ENCODE measurements at regions of chr11 and their contacts with region 1.

Region 1: GRCh38 chr11:73760679-73761402 is at the start of gene RAB6A:
- DNase-seq: peak; percentile 95
- ATAC-seq: peak; percentile 95
- H3K4me3 ChIP-seq: peak within 1 kb of the TSS; percentile 58 to 85
- H3K27ac ChIP-seq: peak within 1 kb of the TSS; percentile 89
- H3K4me1 ChIP-seq: peaks cover 19% of the 10 kb centered on the region; the same call in 1 of the 2 replicates
- H3K27me3 ChIP-seq: no peaks in the 10 kb centered on the region; the same call in 1 of the 2 replicates
- CTCF ChIP-seq: no peak
- total RNA-seq, gene RAB6A: 149 TPM

Region 2: GRCh38 chr11:73734993-73735392 is 25.8 kb before region 1 on chr11:
- CTCF ChIA-PET with region 1: no interaction called
- POLR2A ChIA-PET with region 1: interaction called, 10 read pairs
- in situ Hi-C with region 1: no loop called
- intact Hi-C with region 1: no loop called
- DNase-seq: no peak
- ATAC-seq: no peak
- H3K4me3 ChIP-seq: no peak overlapping the region
- H3K27ac ChIP-seq: no peak overlapping the region
- H3K4me1 ChIP-seq: no peaks in the 10 kb centered on the region
- H3K27me3 ChIP-seq: no peaks in the 10 kb centered on the region
- CTCF ChIP-seq: no peak

Region 3: GRCh38 chr11:73787643-73788537 is 27.0 kb after region 1 on chr11 and contains the start of gene MRPL48:
- CTCF ChIA-PET with region 1: no interaction called
- POLR2A ChIA-PET with region 1: no interaction called
- in situ Hi-C with region 1: no loop called
- intact Hi-C with region 1: no loop called
- DNase-seq: peak; percentile 88
- ATAC-seq: peak; percentile 99
- H3K4me3 ChIP-seq: peak within 1 kb of the TSS; percentile 65 to 69
- H3K27ac ChIP-seq: peak within 1 kb of the TSS; percentile 99
- H3K4me1 ChIP-seq: peaks cover 12% of the 10 kb centered on the region
- H3K27me3 ChIP-seq: no peaks in the 10 kb centered on the region
- CTCF ChIP-seq: no peak
- total RNA-seq, gene MRPL48: 42.0 TPM

Region 4: GRCh38 chr11:74255741-74256369 is 495.0 kb after region 1 on chr11:
- CTCF ChIA-PET with region 1: no interaction called
- POLR2A ChIA-PET with region 1: no interaction called
- in situ Hi-C with region 1: no loop called
- intact Hi-C with region 1: no loop called
- DNase-seq: peak; percentile 71
- ATAC-seq: peak; percentile 76
- H3K4me3 ChIP-seq: no peak overlapping the region
- H3K27ac ChIP-seq: no peak overlapping the region
- H3K4me1 ChIP-seq: no peaks in the 10 kb centered on the region
- H3K27me3 ChIP-seq: no peaks in the 10 kb centered on the region
- CTCF ChIP-seq: peak; percentile 95